ENCODE measurements at regions of chr17 and their contacts with region 1.

Region 1: DNA sequence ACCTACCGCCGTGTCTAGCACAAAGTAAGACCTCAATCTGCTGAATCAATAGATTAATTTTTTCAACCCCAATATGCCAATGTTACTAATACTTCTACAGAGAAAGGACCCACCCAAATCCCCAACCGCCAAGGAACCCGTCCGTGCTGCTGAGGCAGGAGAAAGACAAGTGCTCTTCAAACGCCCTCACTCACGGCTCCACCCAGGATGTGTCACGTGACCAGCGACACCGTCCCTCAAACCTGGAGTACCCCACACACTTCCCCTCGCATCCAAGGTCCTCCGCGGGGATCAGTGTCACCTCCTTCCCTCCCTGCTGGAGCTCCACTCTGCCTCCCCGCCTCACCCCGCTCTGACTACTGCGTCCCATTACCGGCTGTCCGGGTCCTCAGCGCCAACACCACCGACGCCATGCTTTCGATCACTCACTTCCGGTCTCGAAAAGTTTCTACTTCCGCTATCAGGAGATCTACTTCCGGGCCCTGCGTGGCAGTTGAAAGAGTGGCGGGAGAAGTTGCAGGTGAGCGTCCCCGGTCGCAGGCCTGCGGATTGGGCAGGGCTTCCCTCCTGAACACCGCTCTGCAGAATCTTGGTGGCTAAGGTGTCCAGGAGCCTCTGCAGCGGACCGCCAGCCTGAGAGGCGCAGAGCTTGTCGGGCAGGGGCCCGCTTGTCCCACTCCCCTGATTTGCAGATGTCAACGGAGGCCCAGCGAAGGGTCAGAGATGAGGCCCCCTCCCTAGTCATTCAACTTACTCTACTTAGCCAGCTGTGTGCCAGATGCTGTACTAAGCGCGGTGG is at the starts of genes EME1 and MRPL27:
- DNase-seq: peak; percentile 89
- ATAC-seq: peak; percentile 95
- H3K4me3 Mint-ChIP-seq: peak within 1 kb of the TSS; percentile 89
- H3K27ac Mint-ChIP-seq: peak within 1 kb of the TSS; percentile 99
- H3K4me1 Mint-ChIP-seq: peaks cover 22% of the 10 kb centered on the region
- H3K27me3 Mint-ChIP-seq: no peaks in the 10 kb centered on the region
- total RNA-seq, gene EME1: 38.3 to 40.8 TPM
- total RNA-seq, gene MRPL27: 40.1 to 56.2 TPM

Region 2: DNA sequence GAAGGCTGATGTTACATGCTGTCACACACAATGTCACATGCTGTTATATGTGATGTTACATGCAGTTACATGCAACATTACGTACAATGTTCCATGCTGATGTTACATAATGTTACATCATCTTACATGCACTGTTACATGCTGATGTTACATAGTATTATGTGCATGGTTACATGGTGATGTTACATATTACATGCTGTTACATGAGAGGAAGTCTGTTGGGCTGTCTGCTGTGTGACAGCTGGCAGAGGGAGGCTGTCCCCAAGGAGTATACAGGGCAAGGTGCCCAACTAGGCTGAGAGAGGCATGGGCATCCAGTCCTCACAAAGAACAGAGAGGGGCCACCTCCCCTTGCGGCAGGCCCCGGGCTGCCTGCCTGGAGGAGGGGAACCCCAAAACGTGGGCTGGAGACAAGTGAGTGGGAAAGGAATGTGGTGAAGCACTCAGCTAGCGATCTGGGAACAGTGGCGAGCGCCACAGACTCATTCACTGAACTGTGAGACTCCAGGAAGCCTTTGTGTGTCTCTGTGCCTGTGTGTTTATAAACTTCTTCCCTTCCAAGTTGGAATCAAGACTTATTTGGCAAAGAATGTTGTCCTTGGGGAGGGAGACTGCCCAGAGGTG is 68.1 kb before region 1 on chr17:
- CTCF ChIA-PET with region 1: no interaction called
- POLR2A ChIA-PET with region 1: no interaction called
- intact Hi-C with region 1: no loop called
- DNase-seq: peak; percentile 31
- ATAC-seq: no peak
- H3K4me3 Mint-ChIP-seq: no peak overlapping the region
- H3K27ac Mint-ChIP-seq: no peak overlapping the region
- H3K4me1 Mint-ChIP-seq: peaks cover 21% of the 10 kb centered on the region
- H3K27me3 Mint-ChIP-seq: peaks cover 6% of the 10 kb centered on the region

Region 3: DNA sequence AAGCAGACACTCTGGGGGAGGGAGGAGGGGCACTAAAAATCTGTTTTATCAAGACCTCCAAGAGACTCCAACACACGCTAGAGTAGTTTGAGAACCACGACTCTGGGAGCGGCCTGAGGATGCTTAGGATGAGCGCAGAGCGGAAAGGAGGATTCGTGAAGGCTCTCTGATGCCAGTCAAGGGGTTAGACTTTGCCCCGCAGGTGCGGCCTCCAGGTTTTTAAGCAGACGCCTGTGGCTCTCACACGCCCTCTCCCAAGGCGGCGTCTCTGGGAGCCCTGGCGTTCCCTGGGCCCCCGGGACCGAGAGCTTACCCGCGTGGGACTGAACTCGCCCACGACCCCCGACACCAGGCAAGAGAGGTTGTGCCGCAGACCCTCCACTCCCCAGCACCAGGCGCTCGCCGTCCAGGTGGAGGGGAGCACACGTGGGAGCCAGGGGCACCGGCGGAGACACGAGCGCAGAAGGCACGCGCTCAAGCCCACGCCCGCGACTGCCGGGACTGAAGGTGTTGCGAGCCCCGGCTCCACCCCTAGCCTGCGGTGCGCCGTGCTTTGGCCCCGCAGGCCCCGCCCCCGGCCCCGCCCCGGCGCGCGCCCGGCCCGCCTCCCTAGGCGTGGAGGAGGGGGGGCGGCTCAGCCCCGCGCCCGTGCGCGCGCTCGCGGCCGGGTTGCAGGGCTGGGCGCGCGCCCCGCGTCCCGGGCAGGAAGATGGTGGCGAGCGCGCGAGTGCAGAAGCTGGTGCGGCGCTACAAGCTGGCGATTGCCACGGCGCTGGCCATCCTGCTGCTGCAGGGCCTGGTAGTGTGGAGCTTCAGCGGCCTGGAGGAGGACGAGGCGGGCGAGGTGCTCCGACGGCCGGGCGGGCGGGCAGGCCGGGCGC is 27.3 kb before region 1 on chr17 and contains the start of gene XYLT2:
- CTCF ChIA-PET with region 1: interaction called, 3 read pairs
- POLR2A ChIA-PET with region 1: interaction called, 8 read pairs
- intact Hi-C with region 1: loop called (anchors 1 kb)
- DNase-seq: peak; percentile 95
- ATAC-seq: peak; percentile 91
- H3K4me3 Mint-ChIP-seq: peak within 1 kb of the TSS; percentile 90
- H3K27ac Mint-ChIP-seq: peak within 1 kb of the TSS; percentile 94
- H3K4me1 Mint-ChIP-seq: peaks cover 32% of the 10 kb centered on the region
- H3K27me3 Mint-ChIP-seq: no peaks in the 10 kb centered on the region
- total RNA-seq, gene XYLT2: 29.8 to 30.4 TPM

Region 4: GRCh38 chr17:50397111-50397918 is 24.4 kb after region 1 on chr17 and contains the start of gene LRRC59:
- CTCF ChIA-PET with region 1: interaction called, 31 read pairs
- POLR2A ChIA-PET with region 1: interaction called, 5 read pairs
- intact Hi-C with region 1: loop called (anchors 1 kb)
- DNase-seq: peak; percentile 95
- ATAC-seq: peak; percentile 95
- H3K4me3 Mint-ChIP-seq: peak within 1 kb of the TSS; percentile 93
- H3K27ac Mint-ChIP-seq: peak within 1 kb of the TSS; percentile 88
- H3K4me1 Mint-ChIP-seq: peaks cover 33% of the 10 kb centered on the region
- H3K27me3 Mint-ChIP-seq: no peaks in the 10 kb centered on the region
- total RNA-seq, gene LRRC59: 74.4 to 82.7 TPM

Region 5: DNA sequence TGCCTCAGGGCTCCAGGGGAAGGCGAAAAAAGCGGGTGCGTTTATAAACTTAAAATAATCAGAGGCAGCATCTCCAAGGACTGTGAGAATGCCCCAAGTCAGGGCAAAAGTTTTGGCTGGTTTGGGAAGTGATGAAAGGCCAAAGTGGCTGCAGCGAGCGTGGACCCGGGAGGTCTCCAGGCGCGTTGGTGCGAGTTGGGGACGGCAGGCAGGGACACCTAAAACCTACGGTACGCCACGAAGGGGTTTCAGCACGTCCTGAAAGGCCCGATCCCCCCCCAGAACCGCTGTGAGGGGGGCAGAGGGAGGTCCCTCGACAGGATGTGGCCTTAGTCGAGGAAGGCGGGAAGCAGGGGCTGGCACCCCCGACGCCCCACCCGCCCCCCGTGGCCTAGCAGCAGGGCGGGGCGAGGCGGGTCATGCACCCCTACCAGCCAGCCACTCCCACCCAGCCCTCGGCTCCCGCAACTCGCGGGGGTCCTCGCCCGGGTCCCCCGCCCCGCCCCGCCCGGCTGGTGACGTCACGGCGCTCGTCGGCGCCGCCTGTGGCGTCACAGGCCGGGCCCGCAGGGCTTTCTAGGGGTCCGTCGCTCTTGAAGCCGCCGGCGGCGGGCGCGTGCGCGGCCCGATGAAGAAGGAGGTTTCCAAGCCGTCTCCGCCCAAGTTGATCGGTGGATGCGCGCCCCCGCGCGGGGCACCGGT is 135.1 kb after region 1 on chr17 and contains the start of gene MYCBPAP:
- CTCF ChIA-PET with region 1: no interaction called
- POLR2A ChIA-PET with region 1: no interaction called
- intact Hi-C with region 1: loop called in 1 of 2 experiments (anchors 1 kb)
- DNase-seq: peak; percentile 85
- ATAC-seq: peak; percentile 38
- H3K4me3 Mint-ChIP-seq: peak within 1 kb of the TSS; percentile 72
- H3K27ac Mint-ChIP-seq: peak within 1 kb of the TSS; percentile 77
- H3K4me1 Mint-ChIP-seq: peaks cover 34% of the 10 kb centered on the region
- H3K27me3 Mint-ChIP-seq: peaks cover 4% of the 10 kb centered on the region
- total RNA-seq, gene MYCBPAP: 1.4 to 1.8 TPM

Region 6: DNA sequence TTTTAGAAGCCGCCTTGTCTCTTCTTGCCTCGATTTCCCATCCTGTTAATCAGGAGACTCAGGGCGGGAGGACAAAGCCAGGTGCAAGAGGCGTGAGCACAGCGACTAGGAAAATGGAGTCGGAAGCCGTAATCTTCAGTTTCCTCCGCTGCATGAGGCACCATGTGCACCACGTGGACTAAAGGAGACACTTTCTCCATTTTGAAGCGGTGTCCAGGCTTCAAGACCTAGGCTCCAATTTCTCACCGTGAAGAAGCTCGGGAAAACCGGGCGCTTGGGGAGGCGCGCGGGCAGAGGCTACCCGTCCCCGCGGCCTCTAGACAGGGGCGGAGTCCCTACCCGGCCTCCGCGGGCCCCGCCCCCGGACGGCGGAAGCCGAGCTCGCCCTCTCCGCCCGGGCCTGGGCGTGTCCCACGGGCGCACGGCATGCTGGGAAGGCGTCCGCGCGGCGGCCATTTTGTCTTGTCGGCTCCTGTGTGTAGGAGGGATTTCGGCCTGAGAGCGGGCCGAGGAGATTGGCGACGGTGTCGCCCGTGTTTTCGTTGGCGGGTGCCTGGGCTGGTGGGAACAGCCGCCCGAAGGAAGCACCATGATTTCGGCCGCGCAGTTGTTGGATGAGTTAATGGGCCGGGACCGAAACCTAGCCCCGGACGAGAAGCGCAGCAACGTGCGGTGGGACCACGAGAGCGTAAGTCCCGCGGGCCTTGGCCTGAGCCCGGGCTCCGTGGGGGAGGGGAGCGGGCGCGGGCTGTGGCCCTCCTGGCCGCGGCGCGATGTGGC is 346.4 kb after region 1 on chr17 and contains the start of gene LUC7L3:
- CTCF ChIA-PET with region 1: no interaction called
- POLR2A ChIA-PET with region 1: no interaction called
- intact Hi-C with region 1: loop called in 1 of 2 experiments (anchors 1 kb)
- DNase-seq: peak; percentile 97
- ATAC-seq: peak; percentile 89
- H3K4me3 Mint-ChIP-seq: peak within 1 kb of the TSS; percentile 87
- H3K27ac Mint-ChIP-seq: peak within 1 kb of the TSS; percentile 99
- H3K4me1 Mint-ChIP-seq: peaks cover 22% of the 10 kb centered on the region
- H3K27me3 Mint-ChIP-seq: no peaks in the 10 kb centered on the region
- total RNA-seq, gene LUC7L3: 112 to 120 TPM

Measured in activated CD4-positive, alpha-beta T cell treated with anti-CD3 and anti-CD28 coated beads for 36 hours (primary cell).